ENCODE measurements at regions of chr12 and their contacts with region 1.

Region 1: GRCh38 chr12:31959161-31959700 is at the start of gene RESF1:
- DNase-seq: peak; percentile 92
- ATAC-seq: peak; percentile 81
- H3K4me3 Mint-ChIP-seq: peak within 1 kb of the TSS; percentile 93
- H3K27ac Mint-ChIP-seq: peak within 1 kb of the TSS; percentile 94
- H3K4me1 Mint-ChIP-seq: peaks cover 52% of the 10 kb centered on the region
- H3K27me3 Mint-ChIP-seq: no peaks in the 10 kb centered on the region
- total RNA-seq, gene RESF1: 252 to 261 TPM

Region 2: GRCh38 chr12:31722580-31722979 is 236.7 kb before region 1 on chr12:
- POLR2A ChIA-PET with region 1: interaction called, 11 read pairs
- DNase-seq: no peak
- ATAC-seq: no peak
- H3K4me3 Mint-ChIP-seq: peak overlapping the region; percentile 47
- H3K27ac Mint-ChIP-seq: peak overlapping the region; percentile 87
- H3K4me1 Mint-ChIP-seq: peaks cover 28% of the 10 kb centered on the region
- H3K27me3 Mint-ChIP-seq: no peaks in the 10 kb centered on the region

Region 3: GRCh38 chr12:31804185-31804504 is 155.1 kb before region 1 on chr12:
- POLR2A ChIA-PET with region 1: interaction called, 15 read pairs
- DNase-seq: no peak
- ATAC-seq: peak; percentile 39
- H3K4me3 Mint-ChIP-seq: peak overlapping the region; percentile 84
- H3K27ac Mint-ChIP-seq: peak overlapping the region; percentile 89
- H3K4me1 Mint-ChIP-seq: peaks cover 38% of the 10 kb centered on the region
- H3K27me3 Mint-ChIP-seq: no peaks in the 10 kb centered on the region

Region 4: GRCh38 chr12:31890295-31891285 is 68.6 kb before region 1 on chr12:
- POLR2A ChIA-PET with region 1: interaction called, 32 read pairs
- DNase-seq: no peak
- ATAC-seq: peak; percentile 67
- H3K4me3 Mint-ChIP-seq: peak overlapping the region; percentile 63
- H3K27ac Mint-ChIP-seq: peak overlapping the region; percentile 89
- H3K4me1 Mint-ChIP-seq: peaks cover 38% of the 10 kb centered on the region
- H3K27me3 Mint-ChIP-seq: no peaks in the 10 kb centered on the region

Region 5: GRCh38 chr12:31928246-31929026 is 30.8 kb before region 1 on chr12:
- POLR2A ChIA-PET with region 1: interaction called, 11 read pairs
- DNase-seq: peak; percentile 44
- ATAC-seq: peak; percentile 76
- H3K4me3 Mint-ChIP-seq: peak overlapping the region; percentile 86
- H3K27ac Mint-ChIP-seq: peak overlapping the region; percentile 96
- H3K4me1 Mint-ChIP-seq: peaks cover 34% of the 10 kb centered on the region
- H3K27me3 Mint-ChIP-seq: no peaks in the 10 kb centered on the region

Region 6: GRCh38 chr12:31944299-31944698 is 14.9 kb before region 1 on chr12:
- POLR2A ChIA-PET with region 1: no interaction called
- DNase-seq: no peak
- ATAC-seq: no peak
- H3K4me3 Mint-ChIP-seq: no peak overlapping the region
- H3K27ac Mint-ChIP-seq: no peak overlapping the region
- H3K4me1 Mint-ChIP-seq: no peaks in the 10 kb centered on the region
- H3K27me3 Mint-ChIP-seq: no peaks in the 10 kb centered on the region

Region 7: DNA sequence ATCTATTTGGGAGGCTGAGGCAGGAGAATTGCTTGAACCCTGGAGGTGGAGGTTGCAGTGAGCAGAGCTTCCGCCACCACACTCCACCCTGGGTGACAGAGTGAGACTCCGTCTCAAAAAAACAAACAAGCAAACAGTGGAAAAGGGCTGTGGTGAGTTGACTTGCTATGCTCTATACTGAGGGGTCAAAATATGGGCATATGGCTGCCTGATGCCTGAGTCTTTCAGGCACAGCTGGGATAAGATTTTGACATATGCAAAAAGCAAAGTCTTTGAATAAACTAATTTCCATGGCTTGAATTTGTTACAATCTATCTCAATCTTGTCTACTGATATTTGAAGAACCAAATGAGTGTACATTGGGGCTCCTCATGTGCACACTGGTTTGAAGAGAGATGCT is 107.0 kb after region 1 on chr12:
- POLR2A ChIA-PET with region 1: no interaction called
- DNase-seq: no peak
- ATAC-seq: no peak
- H3K4me3 Mint-ChIP-seq: no peak overlapping the region
- H3K27ac Mint-ChIP-seq: no peak overlapping the region
- H3K4me1 Mint-ChIP-seq: peaks cover 3% of the 10 kb centered on the region
- H3K27me3 Mint-ChIP-seq: no peaks in the 10 kb centered on the region

Measured in activated naive CD8-positive, alpha-beta T cell treated with anti-CD3 and anti-CD28 coated beads, Interleukin-2, amount 10 ng/mL, durations not matched to agents 7 days and 5 days (primary cell).